Activated T-helper 1 cell treated with anti-CD3 and anti-CD28 coated beads, Interleukin-12 subunit alpha, Interleukin-12 subunit beta, Interleukin-2, Interleukin-4 antibody, amounts not matched to agents 30 ng/mL and 10 ng/mL and 1 ng/mL, durations not matched to agents 14 hours and 24 hours and 36 hours (primary cell): ENCODE measurements at regions of chr15 and their contacts with region 1.

Region 1: GRCh38 chr15:82540055-82540983 is at the start of gene RPS17:
- DNase-seq: peak; percentile 98
- H3K4me3 Mint-ChIP-seq: peak within 1 kb of the TSS; percentile 91
- H3K27ac Mint-ChIP-seq: peak within 1 kb of the TSS; percentile 94
- H3K4me1 Mint-ChIP-seq: peaks cover 33% of the 10 kb centered on the region
- H3K27me3 Mint-ChIP-seq: no peaks in the 10 kb centered on the region
- total RNA-seq, gene RPS17: 2,478 and 2,503 TPM in 2 replicates

Region 2: GRCh38 chr15:82046666-82047452 is 493.5 kb before region 1 on chr15:
- intact Hi-C with region 1: loop called (anchors 1 kb)
- DNase-seq: peak; percentile 85
- H3K4me3 Mint-ChIP-seq: peak overlapping the region; percentile 89
- H3K27ac Mint-ChIP-seq: peak overlapping the region; percentile 79
- H3K4me1 Mint-ChIP-seq: peaks cover 12% of the 10 kb centered on the region
- H3K27me3 Mint-ChIP-seq: peaks cover 45% of the 10 kb centered on the region

Region 3: DNA sequence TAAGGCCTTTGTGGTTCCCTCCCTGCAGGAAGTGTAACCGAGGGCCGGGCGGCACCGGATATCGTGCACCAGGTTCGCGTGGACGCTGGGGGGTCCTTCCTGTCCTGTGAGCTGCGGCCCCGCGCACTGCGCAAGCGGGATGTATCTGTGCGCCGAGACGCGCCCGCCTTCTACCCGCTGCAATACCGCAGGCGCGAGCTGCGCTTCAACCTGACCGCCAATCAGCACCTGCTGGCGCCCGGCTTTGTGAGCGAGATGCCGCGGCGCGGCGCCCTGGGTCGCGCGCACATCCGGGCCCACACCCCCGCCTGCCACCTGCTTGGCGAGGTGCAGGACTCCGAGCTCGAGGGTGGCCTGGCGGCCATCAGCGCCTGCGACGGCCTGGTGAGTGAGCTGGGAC is 241.8 kb before region 1 on chr15:
- intact Hi-C with region 1: no loop called
- DNase-seq: peak; percentile 20
- H3K4me3 Mint-ChIP-seq: no peak overlapping the region
- H3K27ac Mint-ChIP-seq: no peak overlapping the region
- H3K4me1 Mint-ChIP-seq: peaks cover 6% of the 10 kb centered on the region
- H3K27me3 Mint-ChIP-seq: peaks cover 8% of the 10 kb centered on the region

Region 4: GRCh38 chr15:82551666-82552247 is 11.4 kb after region 1 on chr15:
- intact Hi-C with region 1: no loop called
- DNase-seq: no peak
- H3K4me3 Mint-ChIP-seq: no peak overlapping the region
- H3K27ac Mint-ChIP-seq: no peak overlapping the region
- H3K4me1 Mint-ChIP-seq: peaks cover 12% of the 10 kb centered on the region
- H3K27me3 Mint-ChIP-seq: peaks cover 30% of the 10 kb centered on the region

Region 5: GRCh38 chr15:82709421-82710207 is 169.3 kb after region 1 on chr15 and contains the start of gene AP3B2:
- intact Hi-C with region 1: loop called (anchors 1 kb)
- DNase-seq: peak; percentile 71
- H3K4me3 Mint-ChIP-seq: peak within 1 kb of the TSS; percentile 62
- H3K27ac Mint-ChIP-seq: no peak within 1 kb of the TSS
- H3K4me1 Mint-ChIP-seq: no peaks in the 10 kb centered on the region
- H3K27me3 Mint-ChIP-seq: peaks cover 6% of the 10 kb centered on the region
- total RNA-seq, gene AP3B2: 0.21 TPM in 1 of 2 replicates, not detected in the other

Region 6: GRCh38 chr15:82832601-82833361 is 292.5 kb after region 1 on chr15:
- intact Hi-C with region 1: loop called (anchors 1 kb)
- DNase-seq: peak; percentile 17
- H3K4me3 Mint-ChIP-seq: peak overlapping the region; percentile 57
- H3K27ac Mint-ChIP-seq: peak overlapping the region; percentile 87
- H3K4me1 Mint-ChIP-seq: peaks cover 54% of the 10 kb centered on the region
- H3K27me3 Mint-ChIP-seq: peaks cover 2% of the 10 kb centered on the region

Region 7: GRCh38 chr15:82999905-83000671 is 459.8 kb after region 1 on chr15:
- intact Hi-C with region 1: loop called (anchors 1 kb)
- DNase-seq: peak; percentile 28
- H3K4me3 Mint-ChIP-seq: peak overlapping the region; percentile 60
- H3K27ac Mint-ChIP-seq: peak overlapping the region; percentile 9
- H3K4me1 Mint-ChIP-seq: peaks cover 9% of the 10 kb centered on the region
- H3K27me3 Mint-ChIP-seq: no peaks in the 10 kb centered on the region